Breast epithelium (tissue), 4 donors: ENCODE measurements at regions of chr3 and their contacts with region 1.

Region 1: DNA sequence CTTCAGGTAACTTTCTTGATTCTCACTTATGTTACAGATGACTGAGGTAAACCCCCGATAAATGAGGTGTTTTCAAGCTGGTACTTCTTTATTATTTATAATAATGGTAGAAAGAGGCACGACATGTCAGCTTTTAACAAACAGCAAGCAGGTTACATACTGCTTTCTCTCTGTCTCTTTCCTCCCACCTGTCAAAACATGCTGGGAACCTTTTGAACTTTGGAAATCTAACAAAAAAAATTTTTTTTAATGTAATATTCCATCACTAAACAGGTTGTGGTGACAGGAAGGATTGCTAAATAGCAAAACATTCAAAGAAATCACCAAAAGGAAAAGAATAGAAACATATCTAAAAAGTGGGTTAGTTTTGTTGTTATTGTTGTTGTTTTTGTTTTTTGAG is 48.2 kb downstream of the ANO10 start:
- DNase-seq: no peak
- H3K4me3 ChIP-seq: no peak overlapping the region
- H3K27ac ChIP-seq: no peak overlapping the region
- H3K4me1 ChIP-seq: no peaks in the 10 kb centered on the region
- H3K27me3 ChIP-seq: no peaks in the 10 kb centered on the region
- CTCF ChIP-seq: no peak
- POLR2A ChIP-seq: no peak

Region 2: GRCh38 chr3:44104668-44105321 is 531.2 kb after region 1 on chr3:
- intact Hi-C with region 1: no loop called
- DNase-seq: no peak
- H3K4me3 ChIP-seq: no peak overlapping the region
- H3K27ac ChIP-seq: no peak overlapping the region
- H3K4me1 ChIP-seq: no peaks in the 10 kb centered on the region
- H3K27me3 ChIP-seq: peaks cover 0 to 6% of the 10 kb centered on the region in 2 donors
- CTCF ChIP-seq: no peak
- POLR2A ChIP-seq: no peak

Region 3: GRCh38 chr3:45553996-45554666 is 1980.6 kb after region 1 on chr3:
- intact Hi-C with region 1: loop called (anchors 10 kb)
- DNase-seq: no peak
- H3K4me3 ChIP-seq: no peak overlapping the region
- H3K27ac ChIP-seq: peak overlapping the region; percentile 33 to 44
- H3K4me1 ChIP-seq: peaks cover 21 to 22% of the 10 kb centered on the region in 2 donors
- H3K27me3 ChIP-seq: no peaks in the 10 kb centered on the region
- CTCF ChIP-seq: no peak
- POLR2A ChIP-seq: no peak